Heart right ventricle (tissue), 16 donors: ENCODE measurements at regions of chr7 and their contacts with region 1.

Region 1: GRCh38 chr7:131107337-131108211 is 220.1 kb upstream of the MKLN1 start:
- DNase-seq: peak; percentile 60 to 79
- ATAC-seq: peak; percentile 41 to 58 (median 50)
- H3K4me3 ChIP-seq: peak overlapping the region; percentile 74 to 97 (median 88)
- H3K27ac ChIP-seq: peak overlapping the region; percentile 94 to 100 (median 99)
- H3K4me1 ChIP-seq: peaks cover 0 to 69% (median 55%) of the 10 kb centered on the region in 9 donors
- H3K27me3 ChIP-seq: no peaks in the 10 kb centered on the region
- CTCF ChIP-seq: peak in 1 of 9 donors; percentile 28

Region 2: DNA sequence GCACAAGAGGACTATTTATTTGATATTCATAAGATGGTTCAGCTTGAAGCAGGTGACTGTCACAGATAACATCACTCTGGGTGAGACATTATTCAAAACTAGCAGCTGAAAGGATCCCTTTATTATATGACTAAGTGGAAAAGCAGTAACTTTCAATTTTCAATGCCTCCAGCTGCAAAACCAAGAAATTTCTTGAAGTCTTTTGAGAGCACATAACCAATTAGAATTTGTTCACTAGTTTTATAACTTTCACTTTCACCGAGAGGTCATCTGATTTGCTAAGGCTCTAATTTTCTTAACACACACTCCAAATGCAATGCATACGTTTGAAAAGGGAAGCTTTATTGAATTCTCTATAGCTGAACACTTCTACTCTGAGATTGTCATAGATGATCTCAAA is 284.9 kb before region 1 on chr7:
- intact Hi-C with region 1: no loop called
- DNase-seq: no peak
- ATAC-seq: no peak
- H3K4me3 ChIP-seq: no peak overlapping the region
- H3K27ac ChIP-seq: no peak overlapping the region
- H3K4me1 ChIP-seq: no peaks in the 10 kb centered on the region
- H3K27me3 ChIP-seq: no peaks in the 10 kb centered on the region
- CTCF ChIP-seq: no peak

Region 3: DNA sequence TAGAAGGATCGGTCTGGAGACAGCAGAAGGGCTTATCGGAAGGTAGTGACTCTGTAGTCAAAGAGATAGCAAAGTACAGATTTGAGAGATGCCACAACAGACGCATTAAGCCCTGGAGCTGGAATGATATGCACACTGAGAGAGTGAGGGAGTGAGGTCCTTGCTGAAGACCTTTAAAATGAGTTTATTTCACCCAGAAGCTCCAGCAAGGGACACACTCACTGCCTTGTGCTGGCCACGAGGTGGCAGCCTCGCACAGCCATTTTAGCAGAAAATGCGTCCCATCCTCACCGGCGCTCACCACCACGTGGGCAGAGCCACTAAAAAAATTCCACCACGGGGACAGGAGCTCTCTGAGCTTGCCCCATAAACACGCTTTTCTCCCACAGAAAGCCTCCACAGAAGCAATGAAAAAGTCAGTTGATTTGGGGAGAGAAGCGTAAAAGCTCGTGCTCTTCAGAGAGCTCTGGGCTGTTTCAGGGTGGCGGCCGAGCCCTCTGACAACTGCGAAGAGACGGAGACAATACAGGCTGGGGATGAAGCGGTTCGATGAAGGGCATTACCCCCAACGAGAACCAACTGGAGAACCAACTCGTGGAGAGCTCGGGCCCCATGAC is 210.6 kb before region 1 on chr7:
- intact Hi-C with region 1: loop called in 1 of 10 experiments (anchors 5 kb)
- DNase-seq: peak; percentile 71 to 77
- ATAC-seq: peak; percentile 48 to 74 (median 65)
- H3K4me3 ChIP-seq: no peak overlapping the region
- H3K27ac ChIP-seq: peak overlapping the region in 7 of 10 donors; percentile 11 to 74 (median 56)
- H3K4me1 ChIP-seq: peaks cover 20 to 86% (median 57%) of the 10 kb centered on the region in 9 donors
- H3K27me3 ChIP-seq: no peaks in the 10 kb centered on the region
- CTCF ChIP-seq: peak; percentile 76 to 91 (median 85)

Region 4: GRCh38 chr7:130951303-130951975 is 156.1 kb before region 1 on chr7:
- intact Hi-C with region 1: no loop called
- DNase-seq: no peak
- ATAC-seq: peak in 5 of 8 donors; percentile 18 to 39 (median 28)
- H3K4me3 ChIP-seq: no peak overlapping the region
- H3K27ac ChIP-seq: peak overlapping the region in 1 of 10 donors; percentile 49
- H3K4me1 ChIP-seq: peaks cover 0 to 84% (median 26%) of the 10 kb centered on the region in 9 donors
- H3K27me3 ChIP-seq: no peaks in the 10 kb centered on the region
- CTCF ChIP-seq: no peak

Region 5: DNA sequence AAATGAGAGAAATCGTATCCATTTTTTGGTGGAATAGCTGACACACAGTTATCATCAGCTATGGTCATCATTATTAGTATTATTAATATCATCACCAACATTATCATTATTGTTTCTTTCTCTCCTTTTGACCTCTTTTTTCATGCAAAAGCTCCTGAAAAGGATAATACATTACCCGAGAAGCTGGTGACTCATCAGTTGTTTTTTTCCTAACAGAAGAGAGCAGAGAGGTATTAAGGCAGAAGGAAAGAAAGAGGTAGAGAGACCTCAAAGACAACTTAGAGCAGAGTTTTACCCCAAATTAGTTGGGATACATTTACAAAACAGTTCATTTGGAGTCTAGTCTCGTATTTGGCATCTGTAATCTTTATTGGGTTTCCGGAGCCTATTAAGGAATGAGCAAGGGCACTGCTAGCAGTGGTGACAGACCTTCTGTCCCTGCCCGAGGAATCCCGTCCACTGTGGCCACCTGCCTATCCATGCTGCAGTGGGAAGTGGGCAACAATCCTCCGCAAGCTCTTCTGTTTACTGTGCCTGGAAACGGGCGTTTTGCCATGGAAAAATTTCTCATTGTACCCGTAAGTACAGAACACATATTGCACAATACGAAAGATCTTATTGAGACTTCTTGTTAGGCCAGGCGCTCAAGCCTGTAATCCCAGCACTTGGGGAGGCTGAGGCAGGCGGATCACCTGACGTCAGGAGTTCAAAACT is 50.1 kb after region 1 on chr7:
- intact Hi-C with region 1: loop called in 1 of 10 experiments (anchors 5 kb)
- DNase-seq: peak in 1 of 2 donors; percentile 36
- ATAC-seq: peak in 6 of 8 donors; percentile 52 to 95 (median 71)
- H3K4me3 ChIP-seq: no peak overlapping the region
- H3K27ac ChIP-seq: no peak overlapping the region
- H3K4me1 ChIP-seq: peaks cover 0 to 5% (median 0%) of the 10 kb centered on the region in 9 donors
- H3K27me3 ChIP-seq: no peaks in the 10 kb centered on the region
- CTCF ChIP-seq: no peak

Region 6: GRCh38 chr7:131219312-131220041 is 111.9 kb after region 1 on chr7:
- intact Hi-C with region 1: loop called in 1 of 10 experiments (anchors 5 kb)
- DNase-seq: peak; percentile 29 to 67
- ATAC-seq: peak; percentile 87 to 96 (median 96)
- H3K4me3 ChIP-seq: no peak overlapping the region
- H3K27ac ChIP-seq: peak overlapping the region in 9 of 10 donors; percentile 30 to 83 (median 62)
- H3K4me1 ChIP-seq: peaks cover 0 to 23% (median 19%) of the 10 kb centered on the region in 9 donors
- H3K27me3 ChIP-seq: no peaks in the 10 kb centered on the region
- CTCF ChIP-seq: no peak

Region 7: DNA sequence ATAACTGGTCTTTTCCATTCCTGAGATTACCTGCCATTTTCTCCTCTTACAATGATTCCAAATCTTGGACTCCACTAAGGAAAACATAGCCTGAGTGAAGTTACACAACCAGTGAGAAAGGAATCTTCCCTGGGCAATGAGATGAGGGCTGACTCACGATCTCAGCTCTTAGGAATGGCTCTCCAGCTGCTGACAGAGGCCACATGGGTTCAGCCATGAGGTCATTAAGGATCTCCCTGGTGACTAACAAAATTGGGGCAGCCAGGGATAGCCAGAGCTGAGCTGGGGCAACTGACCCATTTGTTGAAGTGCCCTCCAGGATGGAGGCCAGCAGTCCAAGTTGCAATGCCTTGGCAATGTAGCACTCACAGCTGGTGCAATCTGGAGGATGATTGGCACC is 141.4 kb after region 1 on chr7:
- intact Hi-C with region 1: loop called in 1 of 10 experiments (anchors 10 kb)
- DNase-seq: peak; percentile 27 to 48
- ATAC-seq: peak; percentile 83 to 98 (median 92)
- H3K4me3 ChIP-seq: no peak overlapping the region
- H3K27ac ChIP-seq: peak overlapping the region in 2 of 10 donors; percentile 4 to 47
- H3K4me1 ChIP-seq: peaks cover 0 to 16% (median 0%) of the 10 kb centered on the region in 9 donors
- H3K27me3 ChIP-seq: no peaks in the 10 kb centered on the region
- CTCF ChIP-seq: no peak

Region 8: DNA sequence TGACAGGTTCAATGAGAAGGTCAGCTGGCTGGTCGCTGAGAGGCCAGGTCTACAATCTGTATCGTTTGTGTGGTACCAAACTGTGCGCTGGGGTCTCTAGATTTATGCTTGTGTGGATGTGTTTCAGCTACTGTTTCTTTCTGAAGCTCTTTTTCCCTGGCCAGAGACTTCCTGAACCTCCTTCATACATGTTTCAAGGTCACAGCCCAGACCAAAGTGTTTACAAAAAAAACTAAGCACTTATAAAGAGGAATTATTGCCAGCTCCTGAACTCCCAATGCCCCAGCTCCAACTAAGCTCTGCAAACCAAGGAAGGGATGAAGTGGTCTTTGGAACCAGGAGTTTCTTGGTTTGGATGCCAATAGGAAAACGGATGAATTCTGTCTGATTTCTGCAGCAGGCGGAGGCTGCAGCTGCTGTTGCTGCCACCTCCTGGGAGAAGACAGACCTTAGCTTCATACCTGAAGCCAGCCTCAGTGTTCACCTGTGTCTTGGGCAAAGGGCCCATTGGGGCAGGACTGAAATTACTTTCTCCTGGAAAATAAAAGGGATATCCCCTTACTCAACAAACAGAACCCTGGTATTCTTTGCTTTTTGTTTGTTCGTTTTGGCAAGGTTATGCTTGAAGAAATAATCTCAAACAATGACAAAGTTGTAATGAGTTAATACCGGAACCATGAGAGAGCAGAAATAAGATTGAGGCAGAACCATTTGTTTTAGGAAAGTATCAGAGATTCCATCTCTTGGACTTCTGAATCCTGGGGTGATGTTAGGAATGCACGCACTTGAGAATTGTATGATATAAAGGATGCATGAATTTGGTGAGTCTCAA is 195.5 kb after region 1 on chr7:
- intact Hi-C with region 1: loop called in 3 of 10 experiments (anchors 1 to 5 kb)
- DNase-seq: peak in 1 of 2 donors; percentile 23
- ATAC-seq: peak; percentile 36 to 66 (median 49)
- H3K4me3 ChIP-seq: no peak overlapping the region
- H3K27ac ChIP-seq: peak overlapping the region in 9 of 10 donors; percentile 3 to 78 (median 48)
- H3K4me1 ChIP-seq: peaks cover 0 to 40% (median 23%) of the 10 kb centered on the region in 9 donors
- H3K27me3 ChIP-seq: no peaks in the 10 kb centered on the region
- CTCF ChIP-seq: peak in 8 of 9 donors; percentile 34 to 72 (median 59)

Region 9: GRCh38 chr7:131424219-131424822 is 316.7 kb after region 1 on chr7:
- intact Hi-C with region 1: loop called in 5 of 10 experiments (anchors 2 to 10 kb)
- DNase-seq: no peak
- ATAC-seq: peak; percentile 48 to 86 (median 64)
- H3K4me3 ChIP-seq: no peak overlapping the region
- H3K27ac ChIP-seq: no peak overlapping the region
- H3K4me1 ChIP-seq: peaks cover 0 to 29% (median 13%) of the 10 kb centered on the region in 9 donors
- H3K27me3 ChIP-seq: no peaks in the 10 kb centered on the region
- CTCF ChIP-seq: peak; percentile 44 to 76 (median 68)